ENCODE measurements at regions of chr6 and their contacts with region 1.

Region 1: GRCh38 chr6:107704347-107705013 is 119.6 kb downstream of the SCML4 start:
- DNase-seq: peak in 4 of 14 experiments; percentile 39 to 69 (median 56)
- ATAC-seq: no peak
- H3K4me3 ChIP-seq: no peak overlapping the region
- H3K4me3 Mint-ChIP-seq: no peak overlapping the region
- H3K27ac ChIP-seq: no peak overlapping the region
- H3K27ac Mint-ChIP-seq: peak overlapping the region; percentile 90
- H3K4me1 ChIP-seq: peaks cover 13% of the 10 kb centered on the region
- H3K4me1 Mint-ChIP-seq: peaks cover 61% of the 10 kb centered on the region
- H3K27me3 ChIP-seq: no peaks in the 10 kb centered on the region
- H3K27me3 Mint-ChIP-seq: no peaks in the 10 kb centered on the region
- CTCF ChIP-seq: peak; percentile 86

Region 2: DNA sequence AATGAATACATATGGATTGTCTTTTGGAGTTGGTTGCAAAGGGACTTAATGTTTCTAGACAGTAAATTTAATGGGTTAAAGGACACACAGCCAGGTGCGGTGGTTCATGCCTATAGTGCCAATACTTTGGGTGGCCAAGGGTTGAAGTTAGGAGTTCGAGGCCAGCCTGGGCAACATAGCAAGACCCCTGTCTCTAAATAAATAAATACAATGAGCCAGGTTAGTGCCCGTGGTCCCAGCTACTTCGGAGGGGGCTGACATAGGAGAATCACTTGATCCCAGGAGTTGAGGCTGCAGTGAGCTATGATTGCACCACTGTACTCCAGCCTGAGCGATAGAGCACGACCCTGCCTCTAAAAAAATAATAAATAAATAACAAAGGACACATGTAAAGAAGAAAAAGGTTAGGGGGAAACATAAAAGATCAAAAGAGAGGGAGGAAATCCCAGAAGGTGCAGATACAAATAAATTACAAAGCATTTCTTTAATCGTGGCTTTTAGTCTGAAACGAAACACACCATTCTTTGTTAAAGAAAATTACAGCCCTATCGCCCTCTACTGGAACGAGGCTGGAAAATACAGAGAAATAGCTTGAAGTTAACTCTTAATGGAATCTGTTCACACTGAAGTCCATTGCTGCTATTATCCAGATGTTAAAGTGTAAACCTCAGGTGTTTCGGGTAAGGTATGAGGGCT is 162.3 kb after region 1 on chr6:
- CTCF ChIA-PET with region 1: interaction called, 6 read pairs
- POLR2A ChIA-PET with region 1: no interaction called
- intact Hi-C with region 1: loop called in 1 of 2 experiments (anchors 1 kb)
- DNase-seq: peak in 6 of 14 experiments; percentile 17 to 76 (median 60)
- ATAC-seq: peak; percentile 78
- H3K4me3 ChIP-seq: no peak overlapping the region
- H3K4me3 Mint-ChIP-seq: no peak overlapping the region
- H3K27ac ChIP-seq: no peak overlapping the region
- H3K27ac Mint-ChIP-seq: peak overlapping the region; percentile 13
- H3K4me1 ChIP-seq: peaks cover 3% of the 10 kb centered on the region
- H3K4me1 Mint-ChIP-seq: peaks cover 7% of the 10 kb centered on the region
- H3K27me3 ChIP-seq: no peaks in the 10 kb centered on the region
- H3K27me3 Mint-ChIP-seq: peaks cover 4% of the 10 kb centered on the region
- CTCF ChIP-seq: peak; percentile 79